PC-3 (cell line): ENCODE measurements at regions of chr3 and their contacts with region 1.

Region 1: DNA sequence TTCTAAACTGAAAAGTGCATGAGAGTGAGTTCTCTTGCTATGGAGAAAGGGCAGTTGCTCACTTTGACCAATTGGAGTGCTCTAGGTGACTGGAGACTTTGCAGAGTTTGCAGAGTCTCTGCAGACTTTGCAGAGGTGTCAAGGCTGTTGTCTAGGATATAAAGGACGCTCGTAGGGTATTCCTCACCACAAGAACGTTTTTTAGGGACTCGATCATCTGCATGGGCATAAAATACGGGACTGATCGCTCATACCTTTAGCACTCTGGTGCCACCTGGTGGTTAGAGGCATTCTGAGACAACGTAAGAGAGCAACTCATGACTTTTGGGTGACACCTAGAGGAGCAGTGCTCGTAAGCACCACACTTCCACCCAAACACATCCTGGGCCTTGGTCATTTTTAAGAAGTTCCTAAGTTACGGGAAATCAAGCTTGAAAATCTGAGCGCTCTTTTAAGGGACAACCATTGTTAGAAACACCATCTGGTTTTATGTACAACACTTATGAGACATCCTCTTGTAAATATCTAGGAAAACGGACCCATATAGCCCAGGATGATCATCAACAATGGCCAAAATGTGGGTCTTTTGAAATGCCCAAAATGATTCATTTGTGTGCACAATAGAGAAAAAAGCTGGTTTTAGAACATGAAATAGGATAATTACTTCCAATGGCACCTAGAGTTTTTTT is 51.6 kb upstream of the XCR1 start:
- DNase-seq: peak; percentile 98
- ATAC-seq: peak; percentile 83
- H3K4me3 ChIP-seq: peak overlapping the region; percentile 21; the same call in 1 of the 2 replicates
- H3K27ac ChIP-seq: no peak overlapping the region
- H3K4me1 ChIP-seq: peaks cover 49% of the 10 kb centered on the region
- H3K27me3 ChIP-seq: no peaks in the 10 kb centered on the region
- CTCF ChIP-seq: peak; percentile 100

Region 2: DNA sequence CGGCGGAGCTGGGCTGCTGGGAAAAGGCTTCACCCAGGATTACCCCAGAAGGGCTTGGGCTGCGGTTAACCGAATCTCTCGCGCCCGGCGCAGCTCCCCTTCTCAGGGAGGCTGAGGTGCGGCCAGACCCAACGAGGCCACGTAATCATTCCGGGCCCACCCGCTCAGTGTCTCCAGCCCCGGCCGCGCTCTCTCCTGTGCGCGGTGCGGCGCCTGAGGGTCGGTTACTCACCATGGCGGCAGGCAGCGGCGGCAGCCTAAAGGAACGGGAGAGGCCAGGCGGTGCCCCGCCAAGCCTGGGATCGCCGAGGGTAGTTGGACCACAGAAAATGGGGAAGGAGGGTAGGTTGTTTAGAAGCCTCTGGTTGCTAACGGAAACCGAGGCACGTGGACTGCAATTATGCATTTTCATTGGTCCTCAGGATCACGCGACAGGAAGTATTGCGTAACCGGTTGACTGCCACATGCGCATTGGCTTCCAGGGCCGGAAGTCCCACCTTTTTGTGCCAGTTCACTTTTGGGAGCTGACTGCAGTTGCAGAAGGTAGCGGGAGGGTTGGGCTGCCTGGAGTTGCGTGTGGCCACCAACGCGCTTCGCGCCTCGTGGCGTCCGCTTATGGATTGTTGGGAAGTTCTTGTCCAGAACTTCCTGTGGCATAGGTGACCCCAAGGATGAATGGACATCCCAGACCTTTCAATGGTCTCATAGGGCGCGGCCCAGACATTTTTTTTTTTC is 236.9 kb before region 1 on chr3 and contains the start of gene LZTFL1:
- CTCF ChIA-PET with region 1: no interaction called
- POLR2A ChIA-PET with region 1: no interaction called
- intact Hi-C with region 1: loop called (anchors 5 kb)
- DNase-seq: peak; percentile 98
- ATAC-seq: peak; percentile 82
- H3K4me3 ChIP-seq: peak within 1 kb of the TSS; percentile 97
- H3K27ac ChIP-seq: peak within 1 kb of the TSS; percentile 39
- H3K4me1 ChIP-seq: peaks cover 25% of the 10 kb centered on the region
- H3K27me3 ChIP-seq: peaks cover 3% of the 10 kb centered on the region; the same call in 1 of the 2 replicates
- CTCF ChIP-seq: no peak
- total RNA-seq, gene LZTFL1: 8.3 and 14.2 TPM in 2 replicates

Region 3: DNA sequence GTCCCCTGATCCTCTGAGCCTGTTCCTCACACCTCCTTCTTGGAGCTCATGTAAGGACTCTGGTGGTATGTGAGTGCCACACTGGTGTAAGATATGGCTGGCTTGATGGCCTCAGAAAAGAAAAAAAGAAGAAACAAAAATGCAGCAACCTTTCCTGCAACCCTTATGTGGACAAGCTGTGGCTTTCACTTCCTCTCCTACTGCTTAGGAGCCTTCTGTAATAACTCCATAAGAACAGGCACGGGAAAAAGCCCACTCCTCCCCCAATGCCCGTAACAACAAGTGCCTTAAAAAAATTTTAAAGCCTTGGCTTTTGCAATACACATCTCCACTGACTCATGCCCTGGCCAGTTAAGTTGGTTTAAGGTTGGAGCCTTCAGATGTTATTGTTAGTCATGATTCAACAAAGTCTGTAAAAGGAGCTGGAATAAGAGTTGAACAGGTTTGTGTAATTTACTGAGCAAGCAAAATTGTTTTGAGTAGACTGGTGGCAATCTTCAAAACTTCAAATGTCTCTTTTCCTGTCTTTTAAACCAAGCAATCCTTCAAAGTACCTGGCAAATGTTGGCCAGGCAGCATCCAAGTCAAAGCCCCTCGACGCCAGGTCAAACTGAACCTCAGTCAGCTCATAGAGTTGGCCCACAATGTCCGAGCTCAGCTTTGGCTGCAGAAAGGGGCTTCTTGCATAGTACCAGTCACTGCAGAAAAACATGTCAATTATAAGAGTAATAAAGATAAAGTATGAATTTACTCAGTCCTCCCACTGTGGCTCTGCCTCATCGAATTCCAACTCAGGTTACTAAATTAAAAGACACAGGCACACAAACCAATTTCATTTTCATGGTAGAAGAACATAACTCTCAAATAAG is 106.1 kb before region 1 on chr3:
- CTCF ChIA-PET with region 1: interaction called, 5 read pairs
- POLR2A ChIA-PET with region 1: no interaction called
- intact Hi-C with region 1: loop called (anchors 1 kb)
- DNase-seq: peak; percentile 94
- ATAC-seq: peak; percentile 98
- H3K4me3 ChIP-seq: peak overlapping the region; percentile 30; the same call in 1 of the 2 replicates
- H3K27ac ChIP-seq: peak overlapping the region; percentile 53
- H3K4me1 ChIP-seq: peaks cover 24% of the 10 kb centered on the region
- H3K27me3 ChIP-seq: no peaks in the 10 kb centered on the region
- CTCF ChIP-seq: no peak

Region 4: DNA sequence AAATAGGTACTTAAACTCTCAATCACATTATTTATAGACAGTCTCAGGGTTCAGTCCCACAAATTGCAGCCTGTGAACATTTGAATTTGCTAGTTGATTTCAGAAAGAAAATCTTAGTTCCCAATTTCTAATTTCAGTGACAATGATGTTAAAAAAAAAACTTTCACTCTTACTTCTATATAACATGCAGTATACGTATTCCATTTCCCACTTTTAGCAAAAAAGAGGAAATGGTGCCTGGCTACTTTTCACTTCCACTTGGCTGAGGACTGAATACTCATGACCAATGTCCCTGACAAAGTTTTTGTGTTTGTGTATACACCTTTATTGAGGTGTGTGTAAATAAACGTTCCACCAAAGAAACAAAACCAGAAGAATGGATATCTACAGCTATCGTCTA is 19.4 kb before region 1 on chr3:
- CTCF ChIA-PET with region 1: interaction called, 12 read pairs
- POLR2A ChIA-PET with region 1: no interaction called
- intact Hi-C with region 1: no loop called
- DNase-seq: no peak
- ATAC-seq: no peak
- H3K4me3 ChIP-seq: no peak overlapping the region
- H3K27ac ChIP-seq: no peak overlapping the region
- H3K4me1 ChIP-seq: peaks cover 11% of the 10 kb centered on the region
- H3K27me3 ChIP-seq: no peaks in the 10 kb centered on the region
- CTCF ChIP-seq: no peak